Activated CD4-positive, alpha-beta T cell treated with anti-CD3 and anti-CD28 coated beads for 36 hours (primary cell): ENCODE measurements at regions of chr11 and their contacts with region 1.

Region 1: DNA sequence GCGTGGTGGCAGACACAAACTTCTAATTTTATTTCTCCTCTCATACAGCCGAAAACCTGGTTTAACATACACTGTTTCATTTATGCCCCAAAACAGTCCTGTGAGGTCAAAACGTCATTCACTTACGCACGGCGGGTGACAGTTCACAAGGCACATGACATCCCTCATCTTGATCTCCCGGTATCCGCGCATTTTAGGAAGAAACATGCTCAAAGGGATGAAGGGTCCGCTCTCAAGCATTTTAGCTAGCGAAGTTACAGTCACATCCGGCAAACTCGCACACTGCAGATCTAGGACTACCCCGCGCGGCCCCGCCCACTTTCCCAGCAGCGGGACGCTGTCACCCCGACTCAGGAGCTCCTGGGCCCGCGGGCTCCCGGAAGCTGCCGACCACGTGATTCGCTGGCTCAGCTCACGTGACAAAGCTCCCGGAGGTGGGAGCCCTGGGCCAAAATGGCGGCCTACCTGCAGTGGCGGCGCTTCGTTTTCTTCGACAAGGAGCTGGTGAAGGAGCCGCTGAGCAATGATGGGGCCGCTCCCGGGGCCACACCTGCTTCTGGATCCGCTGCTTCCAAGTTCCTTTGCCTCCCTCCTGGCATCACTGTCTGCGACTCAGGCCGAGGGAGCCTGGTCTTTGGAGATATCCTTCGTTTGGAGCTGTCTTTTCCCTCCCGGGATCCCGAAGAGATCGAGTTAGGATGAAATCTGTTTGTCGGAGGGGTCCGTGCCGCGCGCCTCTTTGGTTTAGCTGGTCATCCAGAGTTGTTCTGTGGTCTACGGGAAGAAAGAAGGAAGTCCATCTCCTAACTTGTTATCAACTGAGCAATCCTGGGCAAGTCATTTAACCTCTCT is at the start of gene VPS11:
- DNase-seq: peak; percentile 100
- ATAC-seq: peak; percentile 98
- H3K4me3 Mint-ChIP-seq: peak within 1 kb of the TSS; percentile 87
- H3K27ac Mint-ChIP-seq: peak within 1 kb of the TSS; percentile 98
- H3K4me1 Mint-ChIP-seq: peaks cover 34% of the 10 kb centered on the region
- H3K27me3 Mint-ChIP-seq: no peaks in the 10 kb centered on the region
- total RNA-seq, gene VPS11: 20.5 to 25.4 TPM

Region 2: DNA sequence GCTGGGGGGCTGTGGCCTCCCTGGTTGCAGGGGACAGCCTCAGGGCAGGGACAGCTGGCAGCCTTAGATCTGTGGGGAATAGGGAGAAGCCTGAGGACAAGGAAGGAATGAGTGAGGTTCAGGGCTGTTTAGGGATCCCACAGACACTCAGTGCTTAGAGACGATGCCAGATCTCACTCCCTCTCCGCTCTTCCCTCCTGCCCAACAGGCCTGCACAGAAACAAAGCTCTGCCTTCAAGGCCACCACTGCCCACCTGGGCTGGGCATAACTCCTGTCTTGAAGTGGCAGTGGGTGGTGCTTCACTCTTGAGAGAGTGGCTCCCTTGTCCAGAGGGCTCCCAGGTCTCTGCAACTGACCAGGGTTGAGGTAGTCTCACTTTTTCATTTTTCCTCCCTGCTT is 82.8 kb before region 1 on chr11:
- CTCF ChIA-PET with region 1: no interaction called
- POLR2A ChIA-PET with region 1: no interaction called
- intact Hi-C with region 1: no loop called
- DNase-seq: no peak
- ATAC-seq: no peak
- H3K4me3 Mint-ChIP-seq: no peak overlapping the region
- H3K27ac Mint-ChIP-seq: no peak overlapping the region
- H3K4me1 Mint-ChIP-seq: no peaks in the 10 kb centered on the region
- H3K27me3 Mint-ChIP-seq: no peaks in the 10 kb centered on the region

Region 3: GRCh38 chr11:118997627-118998387 is 69.8 kb before region 1 on chr11 and contains the start of gene CENATAC:
- CTCF ChIA-PET with region 1: interaction called, 3 read pairs
- POLR2A ChIA-PET with region 1: no interaction called
- intact Hi-C with region 1: loop called in 1 of 2 experiments (anchors 1 kb)
- DNase-seq: peak; percentile 98
- ATAC-seq: peak; percentile 93
- H3K4me3 Mint-ChIP-seq: peak within 1 kb of the TSS; percentile 88
- H3K27ac Mint-ChIP-seq: peak within 1 kb of the TSS; percentile 98
- H3K4me1 Mint-ChIP-seq: peaks cover 32% of the 10 kb centered on the region
- H3K27me3 Mint-ChIP-seq: no peaks in the 10 kb centered on the region
- total RNA-seq, gene CENATAC: 23.7 to 26.2 TPM

Region 4: GRCh38 chr11:119030329-119031049 is 37.1 kb before region 1 on chr11 and contains the start of gene SLC37A4:
- CTCF ChIA-PET with region 1: interaction called, 4 read pairs
- POLR2A ChIA-PET with region 1: interaction called, 4 read pairs
- intact Hi-C with region 1: loop called in 1 of 2 experiments (anchors 1 kb)
- DNase-seq: peak; percentile 99
- ATAC-seq: peak; percentile 94
- H3K4me3 Mint-ChIP-seq: peak within 1 kb of the TSS; percentile 76
- H3K27ac Mint-ChIP-seq: peak within 1 kb of the TSS; percentile 86
- H3K4me1 Mint-ChIP-seq: peaks cover 19% of the 10 kb centered on the region
- H3K27me3 Mint-ChIP-seq: no peaks in the 10 kb centered on the region
- total RNA-seq, gene SLC37A4: 26.2 to 36.2 TPM

Region 5: GRCh38 chr11:119084663-119085436 is 17.3 kb after region 1 on chr11 and contains the start of gene HMBS:
- CTCF ChIA-PET with region 1: interaction called, 7 read pairs
- POLR2A ChIA-PET with region 1: interaction called, 28 read pairs
- intact Hi-C with region 1: loop called (anchors 1 kb)
- DNase-seq: peak; percentile 96
- ATAC-seq: peak; percentile 94
- H3K4me3 Mint-ChIP-seq: peak within 1 kb of the TSS; percentile 97
- H3K27ac Mint-ChIP-seq: peak within 1 kb of the TSS; percentile 92
- H3K4me1 Mint-ChIP-seq: peaks cover 22% of the 10 kb centered on the region
- H3K27me3 Mint-ChIP-seq: no peaks in the 10 kb centered on the region
- total RNA-seq, gene HMBS: 39.8 to 41.8 TPM

Region 6: DNA sequence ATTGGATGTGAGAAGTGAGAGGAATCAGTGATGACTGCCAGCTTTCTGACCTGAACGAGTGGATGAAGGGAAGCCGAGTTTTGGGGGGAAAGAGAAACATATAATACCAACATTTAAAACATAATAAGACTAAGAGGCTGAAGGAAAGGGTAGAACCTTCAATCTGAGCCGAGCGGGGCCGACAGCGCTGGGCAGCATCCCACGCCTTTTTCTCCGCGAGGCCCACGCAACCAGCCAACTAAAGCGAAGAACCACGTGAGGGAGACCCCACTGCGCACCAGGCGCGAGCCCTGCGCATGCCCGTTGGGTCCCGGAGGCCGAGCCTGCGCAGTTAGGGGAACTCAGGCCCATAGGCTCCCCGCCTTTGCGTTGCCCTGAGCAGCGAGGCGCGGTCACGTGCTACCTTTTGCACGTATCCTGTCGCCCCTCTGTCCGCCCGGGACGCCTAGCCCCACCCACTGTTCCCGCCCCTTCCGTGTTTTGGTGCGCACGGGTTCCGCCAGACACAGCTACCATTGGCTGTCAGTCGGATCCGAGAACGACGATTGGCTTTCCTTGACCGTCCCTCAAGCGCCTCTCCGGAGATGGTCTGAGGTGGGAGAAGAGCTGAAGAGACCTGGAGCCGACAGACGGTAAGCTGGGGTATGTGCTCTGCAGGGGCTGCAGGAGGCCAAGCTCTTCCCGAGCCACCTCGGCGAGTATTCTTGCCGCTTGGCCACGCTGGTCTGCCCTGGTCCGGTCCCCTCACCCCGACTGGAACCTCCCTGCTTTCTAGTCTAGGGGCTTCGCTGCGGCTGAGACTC is 53.6 kb after region 1 on chr11 and contains the start of gene HINFP:
- CTCF ChIA-PET with region 1: interaction called, 3 read pairs
- POLR2A ChIA-PET with region 1: interaction called, 3 read pairs
- intact Hi-C with region 1: loop called (anchors 1 kb)
- DNase-seq: peak; percentile 100
- ATAC-seq: peak; percentile 98
- H3K4me3 Mint-ChIP-seq: peak within 1 kb of the TSS; percentile 94
- H3K27ac Mint-ChIP-seq: peak within 1 kb of the TSS; percentile 91
- H3K4me1 Mint-ChIP-seq: peaks cover 25% of the 10 kb centered on the region
- H3K27me3 Mint-ChIP-seq: no peaks in the 10 kb centered on the region
- total RNA-seq, gene HINFP: 24.0 to 27.2 TPM

Region 7: GRCh38 chr11:119144825-119145486 is 77.4 kb after region 1 on chr11:
- CTCF ChIA-PET with region 1: no interaction called
- POLR2A ChIA-PET with region 1: no interaction called
- intact Hi-C with region 1: no loop called
- DNase-seq: peak; percentile 58
- ATAC-seq: peak; percentile 35
- H3K4me3 Mint-ChIP-seq: no peak overlapping the region
- H3K27ac Mint-ChIP-seq: no peak overlapping the region
- H3K4me1 Mint-ChIP-seq: peaks cover 8% of the 10 kb centered on the region
- H3K27me3 Mint-ChIP-seq: peaks cover 33% of the 10 kb centered on the region

Region 8: DNA sequence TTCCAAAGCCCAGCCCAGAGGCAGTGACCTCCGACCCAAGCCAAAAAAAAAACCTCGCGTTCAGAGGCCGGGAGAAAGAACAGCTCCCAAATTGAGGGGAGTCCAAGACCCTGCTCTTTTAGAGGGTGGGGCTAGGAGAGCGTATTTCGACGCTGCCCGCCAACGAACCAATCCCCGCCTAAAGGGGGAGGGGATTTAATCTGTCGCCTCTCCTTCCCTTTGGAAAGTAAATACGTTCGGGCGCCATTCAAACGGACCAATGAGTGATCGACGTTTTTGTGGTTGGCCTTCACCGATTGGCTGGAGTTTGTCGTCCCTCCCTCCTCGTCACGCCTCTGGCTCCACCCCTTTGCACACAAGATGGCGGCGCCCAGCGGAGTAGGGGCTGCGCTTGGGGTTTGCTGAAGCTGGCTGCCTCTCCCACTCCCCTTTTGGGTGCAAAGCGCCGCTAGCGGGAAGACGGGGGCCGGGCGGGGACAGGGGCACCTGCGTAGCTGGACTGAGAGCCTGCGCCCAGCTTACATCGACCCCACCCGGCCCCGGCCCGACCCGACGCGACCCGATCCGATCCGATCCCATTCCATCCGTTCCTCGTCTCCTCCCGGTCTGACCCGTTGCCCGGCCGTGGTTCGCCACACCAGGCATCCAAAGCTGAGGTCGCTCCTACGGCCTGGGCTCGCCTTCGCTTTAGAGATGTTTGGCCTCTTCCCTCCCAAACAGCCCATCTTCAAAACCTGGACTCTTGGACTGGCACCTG is 266.8 kb after region 1 on chr11 and contains the start of gene RNF26:
- CTCF ChIA-PET with region 1: interaction called, 5 read pairs
- POLR2A ChIA-PET with region 1: no interaction called
- intact Hi-C with region 1: loop called in 1 of 2 experiments (anchors 2 kb)
- DNase-seq: peak; percentile 96
- ATAC-seq: peak; percentile 96
- H3K4me3 Mint-ChIP-seq: peak within 1 kb of the TSS; percentile 99
- H3K27ac Mint-ChIP-seq: peak within 1 kb of the TSS; percentile 99
- H3K4me1 Mint-ChIP-seq: peaks cover 29% of the 10 kb centered on the region
- H3K27me3 Mint-ChIP-seq: peaks cover 7% of the 10 kb centered on the region
- total RNA-seq, gene RNF26: 29.9 TPM